Calu3 (cell line): ENCODE measurements at regions of chr12 and their contacts with region 1.

Region 1: GRCh38 chr12:106136263-106136662 is 2.5 kb downstream of the NUAK1 start:
- DNase-seq: peak; percentile 92
- H3K4me3 Mint-ChIP-seq: peak overlapping the region; percentile 78
- H3K27ac Mint-ChIP-seq: no peak overlapping the region
- H3K4me1 Mint-ChIP-seq: peaks cover 57% of the 10 kb centered on the region
- H3K27me3 Mint-ChIP-seq: no peaks in the 10 kb centered on the region
- CTCF ChIP-seq: peak; percentile 85

Region 2: DNA sequence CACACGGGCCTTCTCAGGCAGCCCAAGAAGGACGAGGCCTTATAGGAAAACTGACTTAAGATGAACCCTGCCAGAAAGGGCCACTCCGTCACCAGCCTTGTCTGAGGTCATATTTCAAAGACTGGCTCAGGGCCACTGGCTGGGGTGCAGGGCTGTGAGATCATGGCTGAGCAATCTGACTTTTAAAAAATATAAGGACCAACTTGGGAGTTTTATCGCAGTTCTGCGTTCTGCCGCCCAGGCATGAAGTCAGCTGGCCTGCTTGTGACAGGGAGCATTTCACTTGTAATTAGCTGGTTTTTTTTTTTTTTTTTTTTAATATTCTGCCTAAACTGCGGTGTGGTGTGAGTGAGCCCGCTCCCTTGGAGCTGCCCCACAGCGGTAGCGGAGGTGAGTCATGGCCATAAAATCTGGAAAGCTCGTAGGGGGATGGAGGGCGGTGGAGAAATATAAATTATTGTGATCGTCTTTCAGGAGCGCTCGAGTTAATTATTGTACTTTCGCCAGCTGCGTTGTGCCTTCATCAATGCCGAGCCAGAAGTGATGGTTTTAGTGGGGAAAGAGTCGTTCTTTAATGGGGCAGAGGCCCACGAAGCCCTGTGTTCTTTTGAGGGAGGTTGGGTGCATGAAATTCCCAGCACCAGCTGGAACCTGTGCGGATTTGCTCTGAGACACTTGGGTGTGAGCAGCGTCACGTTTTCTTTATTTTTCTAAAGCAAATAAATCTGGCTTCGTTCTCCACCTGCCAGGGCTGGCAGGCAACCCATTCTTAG is 573.9 kb before region 1 on chr12:
- CTCF ChIA-PET with region 1: no interaction called
- intact Hi-C with region 1: loop called (anchors 5 kb)
- DNase-seq: peak; percentile 74
- H3K4me3 Mint-ChIP-seq: peak overlapping the region; percentile 52
- H3K27ac Mint-ChIP-seq: peak overlapping the region; percentile 70
- H3K4me1 Mint-ChIP-seq: peaks cover 27% of the 10 kb centered on the region
- H3K27me3 Mint-ChIP-seq: peaks cover 9% of the 10 kb centered on the region
- CTCF ChIP-seq: no peak

Region 3: GRCh38 chr12:105705765-105706164 is 430.5 kb before region 1 on chr12:
- CTCF ChIA-PET with region 1: interaction called, 4 read pairs
- intact Hi-C with region 1: loop called (anchors 2 kb)
- DNase-seq: peak; percentile 55
- H3K4me3 Mint-ChIP-seq: no peak overlapping the region
- H3K27ac Mint-ChIP-seq: no peak overlapping the region
- H3K4me1 Mint-ChIP-seq: no peaks in the 10 kb centered on the region
- H3K27me3 Mint-ChIP-seq: peaks cover 20% of the 10 kb centered on the region
- CTCF ChIP-seq: peak; percentile 71

Region 4: DNA sequence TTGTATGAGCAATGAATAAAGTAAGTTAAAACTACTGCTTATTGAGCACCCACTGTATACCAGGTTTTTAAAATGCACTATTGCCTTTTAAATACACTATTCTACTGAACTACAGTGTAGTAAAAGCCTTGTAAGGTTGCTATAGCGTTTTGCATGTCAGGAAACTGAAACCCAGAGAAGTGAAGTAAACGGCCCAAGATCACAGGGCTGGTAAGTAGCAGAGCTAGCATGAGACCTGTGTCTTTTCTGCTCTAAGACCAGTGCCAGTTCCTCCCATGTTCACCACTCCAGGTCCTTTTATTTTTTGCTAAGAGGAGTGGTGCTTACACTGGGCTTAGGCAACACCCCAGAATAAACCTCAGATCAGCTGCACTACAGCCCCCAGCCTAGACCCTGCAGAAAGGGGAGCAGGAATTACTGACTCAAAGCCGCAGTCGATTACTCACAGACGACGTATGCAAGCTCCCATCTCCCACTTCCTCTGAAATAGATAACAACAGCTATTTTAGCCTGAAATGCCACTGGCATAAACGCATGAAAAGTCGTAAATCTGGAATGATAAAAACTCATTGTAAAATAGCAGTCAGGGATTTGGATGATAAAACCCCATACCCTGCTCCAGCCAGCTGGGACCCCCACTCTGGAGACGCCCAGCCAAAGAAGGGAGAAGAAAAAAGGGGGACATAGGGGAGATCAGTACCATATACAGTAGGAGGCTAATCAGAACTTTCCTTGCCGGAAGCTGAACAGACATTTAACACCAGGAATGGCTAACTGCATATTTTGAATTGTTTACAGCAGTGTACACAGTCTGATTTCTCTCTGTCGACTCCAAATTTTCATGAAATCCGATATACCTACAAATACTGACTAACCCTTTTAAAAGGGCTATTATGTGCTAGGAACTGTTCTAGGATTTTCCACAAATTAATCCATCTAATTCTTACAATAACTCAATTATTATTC is 105.8 kb before region 1 on chr12:
- CTCF ChIA-PET with region 1: interaction called, 3 read pairs
- intact Hi-C with region 1: loop called (anchors 2 kb)
- DNase-seq: peak; percentile 55
- H3K4me3 Mint-ChIP-seq: peak overlapping the region; percentile 45
- H3K27ac Mint-ChIP-seq: peak overlapping the region; percentile 35
- H3K4me1 Mint-ChIP-seq: peaks cover 49% of the 10 kb centered on the region
- H3K27me3 Mint-ChIP-seq: no peaks in the 10 kb centered on the region
- CTCF ChIP-seq: no peak